Endothelial cell of umbilical vein (primary cell): ENCODE measurements at regions of chr4 and their contacts with region 1.

Region 1: GRCh38 chr4:156475322-156475721 is 496.3 kb downstream of the PDGFC start:
- DNase-seq: peak; percentile 69
- H3K4me3 ChIP-seq: no peak overlapping the region
- H3K27ac ChIP-seq: peak overlapping the region; percentile 64
- H3K4me1 ChIP-seq: peaks cover 17% of the 10 kb centered on the region
- H3K27me3 ChIP-seq: no peaks in the 10 kb centered on the region
- CTCF ChIP-seq: peak; percentile 32 to 42
- POLR2A ChIP-seq: no peak

Region 2: GRCh38 chr4:156677131-156677531 is 201.8 kb after region 1 on chr4:
- CTCF ChIA-PET with region 1: interaction called, 34 read pairs
- POLR2A ChIA-PET with region 1: no interaction called
- dilution Hi-C with region 1: no loop called
- intact Hi-C with region 1: loop called (anchors 1 kb)
- DNase-seq: peak; percentile 19
- H3K4me3 ChIP-seq: no peak overlapping the region
- H3K27ac ChIP-seq: no peak overlapping the region
- H3K4me1 ChIP-seq: no peaks in the 10 kb centered on the region
- H3K27me3 ChIP-seq: no peaks in the 10 kb centered on the region
- CTCF ChIP-seq: peak in 1 of 2 donors; percentile 8
- POLR2A ChIP-seq: no peak

Region 3: DNA sequence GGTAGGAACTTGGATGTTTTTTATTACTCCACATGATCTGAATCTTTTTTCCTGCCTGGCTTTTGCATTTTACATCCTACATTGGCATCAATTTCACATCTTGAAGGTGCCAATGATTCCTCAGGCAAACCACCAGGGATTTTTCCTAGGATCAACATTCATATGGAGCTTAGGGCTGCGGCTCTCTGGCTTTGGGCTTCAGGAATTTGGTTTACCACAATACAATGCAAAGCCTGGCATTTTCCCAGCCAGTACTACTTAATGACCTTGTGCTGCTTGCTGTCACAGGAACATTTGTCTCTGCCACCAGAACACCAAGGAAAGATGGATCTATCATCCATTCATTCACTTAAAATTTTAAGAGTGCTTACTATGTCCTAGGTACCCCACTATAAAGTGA is 315.5 kb after region 1 on chr4:
- CTCF ChIA-PET with region 1: interaction called, 4 read pairs
- POLR2A ChIA-PET with region 1: no interaction called
- dilution Hi-C with region 1: no loop called
- intact Hi-C with region 1: loop called (anchors 10 kb)
- DNase-seq: peak; percentile 24
- H3K4me3 ChIP-seq: no peak overlapping the region
- H3K27ac ChIP-seq: no peak overlapping the region
- H3K4me1 ChIP-seq: no peaks in the 10 kb centered on the region
- H3K27me3 ChIP-seq: no peaks in the 10 kb centered on the region
- CTCF ChIP-seq: no peak
- POLR2A ChIP-seq: no peak

Region 4: DNA sequence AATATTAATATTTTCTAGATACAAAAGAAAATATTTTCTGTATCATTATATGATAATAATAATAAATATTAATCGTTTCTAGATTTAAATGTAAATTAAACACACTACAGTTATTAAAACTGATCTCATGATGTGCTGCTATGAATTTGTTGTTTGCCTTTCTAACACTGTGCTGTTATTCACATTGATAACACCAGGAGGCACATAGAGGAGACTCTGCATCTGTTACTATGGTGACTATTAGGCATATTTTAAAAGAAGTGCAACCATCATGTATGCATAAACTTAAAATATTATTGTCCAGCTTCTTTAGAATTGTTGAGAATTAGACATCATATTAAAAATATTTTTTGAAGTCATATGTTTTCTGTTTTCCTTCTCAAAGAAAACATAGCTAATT is 508.0 kb after region 1 on chr4:
- CTCF ChIA-PET with region 1: interaction called, 26 read pairs
- POLR2A ChIA-PET with region 1: no interaction called
- dilution Hi-C with region 1: no loop called
- intact Hi-C with region 1: no loop called
- DNase-seq: peak; percentile 44
- H3K4me3 ChIP-seq: no peak overlapping the region
- H3K27ac ChIP-seq: no peak overlapping the region
- H3K4me1 ChIP-seq: no peaks in the 10 kb centered on the region
- H3K27me3 ChIP-seq: no peaks in the 10 kb centered on the region
- CTCF ChIP-seq: peak; percentile 23 to 43
- POLR2A ChIP-seq: no peak

Region 5: DNA sequence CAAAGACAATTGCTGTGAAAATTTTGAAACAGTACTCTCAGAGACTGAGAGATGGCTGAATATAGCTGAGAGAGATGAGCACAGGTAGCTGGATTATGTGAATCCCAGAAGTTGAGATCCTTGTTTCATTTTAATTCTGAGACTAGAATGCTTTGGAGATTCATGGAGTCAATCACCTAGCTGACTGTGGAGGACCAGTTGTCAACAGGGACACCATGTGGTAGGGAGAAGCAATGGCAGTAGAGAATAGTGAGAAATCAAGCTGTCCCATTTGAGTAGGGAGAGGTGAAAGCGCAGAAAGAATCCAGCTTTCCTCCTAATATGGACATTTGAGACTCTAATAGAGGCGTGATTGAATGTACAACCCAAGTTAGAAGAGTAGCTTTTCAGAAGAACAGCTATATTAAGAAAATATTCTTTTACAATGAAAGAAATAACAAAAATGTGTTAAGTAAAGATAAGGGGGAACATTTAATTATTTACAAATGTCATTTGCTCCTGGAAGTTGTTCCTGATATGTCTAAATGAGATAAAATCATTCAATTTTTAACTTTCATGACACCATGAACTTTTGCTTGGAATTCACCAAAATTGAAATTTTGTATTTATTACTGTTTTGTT is 570.3 kb after region 1 on chr4:
- CTCF ChIA-PET with region 1: interaction called, 210 read pairs
- POLR2A ChIA-PET with region 1: no interaction called
- dilution Hi-C with region 1: no loop called
- intact Hi-C with region 1: loop called (anchors 1 kb)
- DNase-seq: peak; percentile 71
- H3K4me3 ChIP-seq: no peak overlapping the region
- H3K27ac ChIP-seq: no peak overlapping the region
- H3K4me1 ChIP-seq: no peaks in the 10 kb centered on the region
- H3K27me3 ChIP-seq: no peaks in the 10 kb centered on the region
- CTCF ChIP-seq: peak; percentile 72 to 77
- POLR2A ChIP-seq: no peak

Region 6: GRCh38 chr4:157204634-157205244 is 729.4 kb after region 1 on chr4:
- CTCF ChIA-PET with region 1: interaction called, 36 read pairs
- POLR2A ChIA-PET with region 1: no interaction called
- dilution Hi-C with region 1: no loop called
- intact Hi-C with region 1: loop called (anchors 1 kb)
- DNase-seq: no peak
- H3K4me3 ChIP-seq: no peak overlapping the region
- H3K27ac ChIP-seq: no peak overlapping the region
- H3K4me1 ChIP-seq: no peaks in the 10 kb centered on the region
- H3K27me3 ChIP-seq: no peaks in the 10 kb centered on the region
- CTCF ChIP-seq: peak; percentile 42 to 49
- POLR2A ChIP-seq: no peak

Region 7: DNA sequence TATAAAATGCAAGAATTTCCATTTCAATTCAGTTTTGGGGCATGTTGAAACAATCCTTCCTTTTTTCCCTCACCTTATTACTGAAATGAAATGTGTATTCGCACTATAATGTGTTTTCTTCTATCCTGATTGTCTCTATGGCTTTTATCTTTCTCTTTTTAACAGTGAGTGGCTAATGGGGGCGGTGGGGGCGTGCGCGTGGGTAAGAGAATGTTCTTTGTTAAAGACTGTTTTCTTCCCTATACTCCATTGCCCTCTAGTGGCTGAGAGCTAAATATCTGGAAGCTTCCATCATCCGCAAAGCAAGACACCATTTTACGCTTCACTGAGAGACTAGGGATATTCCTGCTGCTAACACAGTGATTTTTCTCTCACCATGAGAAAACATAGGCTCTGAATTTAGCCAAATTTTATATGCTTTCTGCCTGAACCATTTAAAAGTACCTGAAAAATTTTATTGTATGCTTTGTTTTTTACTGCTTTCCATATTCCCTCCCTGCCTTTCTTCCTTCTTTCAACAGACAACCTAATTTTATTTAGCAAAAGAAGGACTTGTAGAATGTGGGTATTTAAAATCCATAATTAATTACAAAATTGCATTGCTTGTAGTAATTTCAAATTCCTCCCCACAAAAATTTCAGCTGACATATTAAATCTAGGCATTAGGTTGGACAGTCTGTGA is 1503.5 kb after region 1 on chr4:
- CTCF ChIA-PET with region 1: interaction called, 15 read pairs
- POLR2A ChIA-PET with region 1: no interaction called
- dilution Hi-C with region 1: no loop called
- intact Hi-C with region 1: loop called (anchors 1 kb)
- DNase-seq: peak; percentile 82
- H3K4me3 ChIP-seq: peak overlapping the region in 2 of 3 experiments; percentile 18 to 75
- H3K27ac ChIP-seq: peak overlapping the region; percentile 44
- H3K4me1 ChIP-seq: peaks cover 29% of the 10 kb centered on the region
- H3K27me3 ChIP-seq: no peaks in the 10 kb centered on the region
- CTCF ChIP-seq: peak; percentile 61 to 67
- POLR2A ChIP-seq: no peak